ENCODE measurements at regions of chr4 and their contacts with region 1.

Region 1: DNA sequence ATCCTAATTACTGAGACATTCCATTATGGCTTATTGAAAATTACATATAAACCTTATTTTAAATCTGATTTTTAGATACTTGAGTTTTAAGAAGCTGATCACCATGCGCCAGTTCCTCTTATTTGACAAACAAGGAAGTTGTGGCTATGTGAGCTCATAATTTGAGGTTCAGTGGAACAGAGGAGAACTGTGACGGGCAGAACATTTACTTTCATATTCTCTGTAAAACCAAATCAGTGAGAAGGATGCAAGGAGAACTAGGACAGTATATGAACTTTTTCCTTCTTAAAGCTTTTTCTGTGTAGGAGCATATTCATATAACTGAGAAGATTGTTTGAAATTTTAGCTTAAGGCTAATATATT is 25.3 kb downstream of the STIM2 start:
- DNase-seq: no peak
- H3K4me3 Mint-ChIP-seq: peak overlapping the region; percentile 74
- H3K27ac Mint-ChIP-seq: peak overlapping the region; percentile 89
- H3K4me1 Mint-ChIP-seq: peaks cover 55% of the 10 kb centered on the region
- H3K27me3 Mint-ChIP-seq: no peaks in the 10 kb centered on the region

Region 2: DNA sequence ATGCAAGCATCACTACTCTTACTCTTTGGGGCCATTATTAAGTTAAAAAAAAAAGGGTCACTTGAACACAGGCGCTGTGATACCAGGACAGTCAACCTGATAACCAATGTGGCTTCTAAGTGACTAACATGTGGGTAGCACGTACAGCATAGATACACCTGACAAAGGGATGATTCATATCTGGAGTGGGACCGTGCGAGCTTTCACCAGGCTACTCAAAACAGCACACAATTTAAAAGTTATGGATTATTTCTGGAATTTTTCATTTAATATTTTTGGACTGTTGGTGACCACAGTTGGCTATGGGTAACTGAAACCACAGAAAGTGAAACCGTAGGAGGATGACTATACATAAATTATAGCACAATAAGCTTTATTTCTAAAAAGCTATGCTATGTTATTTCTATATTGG is 139.1 kb before region 1 on chr4:
- intact Hi-C with region 1: loop called (anchors 10 kb)
- DNase-seq: no peak
- H3K4me3 Mint-ChIP-seq: no peak overlapping the region
- H3K27ac Mint-ChIP-seq: no peak overlapping the region
- H3K4me1 Mint-ChIP-seq: peaks cover 23% of the 10 kb centered on the region
- H3K27me3 Mint-ChIP-seq: peaks cover 19% of the 10 kb centered on the region

Region 3: DNA sequence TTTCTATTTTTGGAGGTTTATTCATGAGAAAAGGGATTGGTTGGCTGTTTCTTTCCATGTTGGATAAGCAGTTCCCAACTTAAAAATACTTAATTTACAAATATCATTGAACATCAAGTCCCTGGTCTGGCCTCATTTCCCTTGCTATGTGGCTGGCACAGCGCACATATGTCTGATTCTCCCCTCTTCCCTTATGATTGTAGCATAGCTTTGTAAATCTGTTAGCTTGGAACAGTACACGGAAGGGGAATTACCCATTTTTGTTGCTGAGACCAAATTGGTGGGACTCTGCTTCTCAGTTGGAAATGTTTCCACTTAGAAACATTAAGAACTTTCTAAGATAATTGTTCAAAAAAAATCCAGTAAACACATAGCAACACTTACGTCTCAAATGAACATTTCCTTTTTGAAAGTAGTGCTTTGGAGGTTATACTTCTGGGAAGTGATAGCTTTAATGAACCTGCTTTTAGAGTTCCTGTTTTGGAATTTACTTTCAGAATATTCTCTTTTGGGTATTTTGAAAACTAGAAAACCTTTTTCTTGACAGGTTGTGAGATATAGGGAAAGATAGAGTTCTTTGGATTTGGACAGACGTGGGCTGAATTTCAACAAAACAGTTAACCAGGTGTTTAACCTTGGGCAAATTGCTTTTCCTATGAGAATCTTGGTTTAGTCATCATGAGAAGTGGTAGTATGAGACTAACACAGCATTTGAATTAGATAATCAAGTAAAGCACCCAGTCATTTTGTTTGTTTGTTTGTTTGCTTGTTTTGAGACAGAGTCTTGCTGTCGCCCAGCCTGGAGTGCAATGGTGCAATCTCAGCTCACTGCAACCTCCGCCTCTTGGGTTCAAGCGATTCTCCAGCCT is 22.1 kb after region 1 on chr4:
- intact Hi-C with region 1: loop called (anchors 2 kb)
- DNase-seq: no peak
- H3K4me3 Mint-ChIP-seq: no peak overlapping the region
- H3K27ac Mint-ChIP-seq: peak overlapping the region; percentile 23
- H3K4me1 Mint-ChIP-seq: peaks cover 46% of the 10 kb centered on the region
- H3K27me3 Mint-ChIP-seq: no peaks in the 10 kb centered on the region

Region 4: DNA sequence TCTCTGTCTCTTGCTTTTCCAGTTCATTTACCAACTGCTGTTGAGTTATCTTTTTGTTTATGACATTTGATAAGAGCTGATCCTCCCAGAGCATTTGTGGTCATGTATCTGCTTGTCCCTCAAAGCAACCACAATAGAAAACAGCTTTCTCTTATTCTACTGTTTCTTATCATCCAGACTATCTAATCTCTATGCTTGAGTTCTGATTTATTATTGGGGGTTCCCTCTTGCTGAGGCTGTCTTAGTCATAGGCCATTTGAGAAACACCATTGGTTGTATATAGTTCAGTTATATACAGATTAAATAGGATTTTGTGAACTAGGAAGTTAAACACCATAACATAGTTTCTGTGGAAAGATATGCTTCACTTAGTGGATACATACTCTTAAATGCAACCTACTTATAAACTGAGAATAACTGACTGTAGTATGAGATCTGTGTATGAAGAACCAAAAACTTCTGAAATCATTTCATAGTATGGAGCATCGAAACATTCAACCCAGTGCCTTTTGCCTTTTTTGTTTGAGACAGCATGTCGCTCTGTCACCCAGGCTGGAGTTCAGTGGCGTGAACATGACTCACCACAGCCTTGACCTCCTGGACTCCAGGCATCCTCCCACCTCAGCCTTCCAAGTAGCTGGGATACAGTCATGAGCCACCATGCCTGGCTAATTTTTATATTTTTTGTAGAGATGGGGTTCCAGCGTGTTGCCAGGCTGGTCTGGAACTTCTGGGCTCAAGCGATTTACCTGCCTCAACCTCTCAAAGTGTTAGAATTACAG is 50.6 kb after region 1 on chr4:
- intact Hi-C with region 1: no loop called
- DNase-seq: no peak
- H3K4me3 Mint-ChIP-seq: no peak overlapping the region
- H3K27ac Mint-ChIP-seq: no peak overlapping the region
- H3K4me1 Mint-ChIP-seq: peaks cover 21% of the 10 kb centered on the region
- H3K27me3 Mint-ChIP-seq: no peaks in the 10 kb centered on the region

Region 5: DNA sequence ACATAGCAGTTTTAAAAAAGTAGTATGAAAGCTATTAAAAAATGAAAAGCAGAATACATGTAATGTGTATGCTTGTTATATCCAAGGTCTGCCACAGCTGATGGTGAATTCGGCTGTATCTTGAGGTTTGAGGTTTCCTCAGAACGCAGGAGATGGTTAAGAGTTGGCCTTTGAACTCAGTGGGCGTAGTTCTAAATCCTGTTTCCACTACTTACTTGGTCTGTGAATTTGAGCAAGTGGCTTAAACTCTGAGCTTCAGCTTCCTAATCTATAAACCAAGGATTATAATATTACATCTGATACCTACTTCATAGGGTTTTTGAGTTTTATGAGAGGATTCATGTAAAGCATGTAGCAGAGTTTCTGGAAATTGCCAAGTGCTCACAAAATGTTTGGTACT is 100.0 kb after region 1 on chr4:
- intact Hi-C with region 1: loop called (anchors 2 kb)
- DNase-seq: peak; percentile 34
- H3K4me3 Mint-ChIP-seq: no peak overlapping the region
- H3K27ac Mint-ChIP-seq: peak overlapping the region; percentile 4
- H3K4me1 Mint-ChIP-seq: peaks cover 26% of the 10 kb centered on the region
- H3K27me3 Mint-ChIP-seq: no peaks in the 10 kb centered on the region

Region 6: GRCh38 chr4:27000820-27001219 is 114.9 kb after region 1 on chr4:
- intact Hi-C with region 1: loop called (anchors 1 kb)
- DNase-seq: no peak
- H3K4me3 Mint-ChIP-seq: no peak overlapping the region
- H3K27ac Mint-ChIP-seq: no peak overlapping the region
- H3K4me1 Mint-ChIP-seq: peaks cover 28% of the 10 kb centered on the region
- H3K27me3 Mint-ChIP-seq: no peaks in the 10 kb centered on the region

Measured in activated T-helper 2 cell treated with anti-CD3 and anti-CD28 coated beads, Interferon-gamma antibody, Interleukin-2, Interleukin-4, amounts not matched to agents 10 μg/mL and 5 μg/mL and 100 μg/mL, durations not matched to agents 14 hours and 24 hours and 36 hours (primary cell).